Aorta (tissue), 5 donors: ENCODE measurements at regions of chrX and their contacts with region 1.

Region 1: GRCh38 chrX:133645977-133646718 is 230.9 kb upstream of the GPC4 start:
- DNase-seq: no peak
- ATAC-seq: peak; percentile 79
- H3K4me3 ChIP-seq: no peak overlapping the region
- H3K27ac ChIP-seq: no peak overlapping the region
- H3K4me1 ChIP-seq: no peaks in the 10 kb centered on the region
- H3K27me3 ChIP-seq: no peaks in the 10 kb centered on the region

Region 2: DNA sequence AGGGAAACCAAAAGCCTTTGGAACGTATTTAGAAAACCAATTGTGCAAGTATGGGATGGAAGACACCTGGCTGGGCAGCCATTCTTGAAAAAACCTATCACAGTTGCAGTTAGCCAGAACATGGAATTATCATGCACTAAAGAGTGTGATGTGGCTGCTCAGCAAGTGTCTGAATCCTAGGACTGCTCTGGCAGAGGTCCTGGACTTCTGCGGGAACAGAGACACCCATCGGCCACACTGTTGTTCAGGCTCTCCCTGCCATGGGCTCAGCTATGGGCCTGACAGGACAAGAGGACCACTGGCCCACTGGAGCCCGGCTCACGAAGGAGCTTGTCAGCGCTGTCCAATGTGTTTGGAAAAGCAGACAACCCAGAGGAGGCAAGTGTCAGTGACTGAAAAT is 115.2 kb before region 1 on chrX:
- intact Hi-C with region 1: no loop called
- DNase-seq: no peak
- ATAC-seq: no peak
- H3K4me3 ChIP-seq: no peak overlapping the region
- H3K27ac ChIP-seq: no peak overlapping the region
- H3K4me1 ChIP-seq: no peaks in the 10 kb centered on the region
- H3K27me3 ChIP-seq: no peaks in the 10 kb centered on the region

Region 3: GRCh38 chrX:133563705-133564104 is 82.4 kb before region 1 on chrX:
- intact Hi-C with region 1: loop called in 1 of 2 experiments (anchors 10 kb)
- DNase-seq: no peak
- ATAC-seq: peak; percentile 57
- H3K4me3 ChIP-seq: no peak overlapping the region
- H3K27ac ChIP-seq: peak overlapping the region in 1 of 2 donors; percentile 35
- H3K4me1 ChIP-seq: no peaks in the 10 kb centered on the region
- H3K27me3 ChIP-seq: no peaks in the 10 kb centered on the region